Activated CD4-positive, alpha-beta memory T cell treated with anti-CD3 and anti-CD28 coated beads for 36 hours (primary cell): ENCODE measurements at regions of chr12 and their contacts with region 1.

Region 1: DNA sequence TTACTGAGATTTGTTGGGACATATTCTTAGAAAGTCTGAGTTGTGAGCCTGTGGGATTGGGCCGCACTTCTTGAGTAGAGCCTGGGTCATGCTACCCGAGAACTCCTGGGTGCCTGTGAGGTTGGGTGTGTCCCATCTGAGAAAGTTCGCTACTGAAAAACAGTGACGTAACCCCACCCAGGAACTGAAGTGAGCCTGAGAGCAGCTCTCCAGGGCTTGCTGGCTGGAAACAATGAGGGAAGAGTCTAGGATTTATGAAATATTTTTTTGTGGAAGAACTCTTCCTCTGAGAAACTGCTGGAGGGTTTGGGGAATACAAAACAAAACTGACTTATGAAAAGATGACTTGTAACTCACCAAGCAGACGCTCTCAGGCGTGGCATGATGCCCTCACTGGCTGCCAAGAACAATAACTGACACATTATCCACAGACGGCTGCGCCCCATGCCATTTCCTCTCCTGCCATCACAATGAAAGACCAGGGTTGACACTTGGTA is 69.2 kb downstream of the RASSF3 start:
- DNase-seq: peak; percentile 78
- H3K4me3 Mint-ChIP-seq: peak overlapping the region; percentile 62
- H3K27ac Mint-ChIP-seq: peak overlapping the region; percentile 91
- H3K4me1 Mint-ChIP-seq: peaks cover 91% of the 10 kb centered on the region
- H3K27me3 Mint-ChIP-seq: no peaks in the 10 kb centered on the region

Region 2: GRCh38 chr12:64459394-64459891 is 220.1 kb before region 1 on chr12:
- CTCF ChIA-PET with region 1: no interaction called
- POLR2A ChIA-PET with region 1: no interaction called
- intact Hi-C with region 1: loop called (anchors 5 kb)
- DNase-seq: no peak
- H3K4me3 Mint-ChIP-seq: peak overlapping the region; percentile 77
- H3K27ac Mint-ChIP-seq: peak overlapping the region; percentile 91
- H3K4me1 Mint-ChIP-seq: peaks cover 45% of the 10 kb centered on the region
- H3K27me3 Mint-ChIP-seq: no peaks in the 10 kb centered on the region

Region 3: DNA sequence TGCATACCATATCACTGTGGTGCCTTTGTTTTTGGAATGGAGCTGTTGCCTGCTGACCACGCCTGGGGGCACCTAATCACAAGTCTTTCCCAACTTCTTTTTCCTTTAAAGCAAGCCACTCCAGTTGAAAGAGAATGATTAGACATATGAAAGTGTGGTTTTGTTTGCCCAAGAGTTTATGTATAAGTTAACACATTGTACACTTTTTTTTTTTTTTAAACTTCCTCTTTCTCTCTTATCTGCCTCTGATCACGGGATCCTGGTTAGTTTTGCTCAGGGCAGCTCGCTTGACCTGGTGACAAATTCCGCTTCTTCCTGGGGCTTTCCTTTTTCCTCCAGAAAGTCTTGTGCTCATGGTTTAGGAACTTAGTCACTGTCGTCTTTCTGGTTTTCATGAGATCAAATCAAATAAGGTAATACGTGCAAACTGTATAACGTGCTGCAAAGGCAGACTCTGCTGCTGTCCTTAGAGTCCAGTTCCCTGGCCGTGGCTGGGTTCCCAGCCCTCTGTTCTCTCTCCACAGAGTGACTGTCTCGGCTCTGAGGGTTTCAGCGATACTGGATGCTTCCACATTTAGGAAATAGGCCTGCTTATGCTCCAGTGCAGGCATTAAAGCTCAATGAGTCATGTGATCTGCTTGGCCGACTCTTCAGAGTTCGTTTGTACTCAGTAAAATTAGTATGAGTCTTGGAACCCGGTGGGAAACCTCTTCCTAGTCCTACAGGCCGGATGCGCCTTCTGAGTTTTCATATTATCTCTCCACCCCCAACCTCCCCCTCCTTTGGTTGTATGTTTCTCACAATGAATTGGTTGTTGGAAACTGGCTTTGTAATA is 54.1 kb before region 1 on chr12:
- CTCF ChIA-PET with region 1: interaction called, 4 read pairs
- POLR2A ChIA-PET with region 1: no interaction called
- intact Hi-C with region 1: loop called (anchors 1 kb)
- DNase-seq: peak; percentile 58
- H3K4me3 Mint-ChIP-seq: peak overlapping the region; percentile 65
- H3K27ac Mint-ChIP-seq: peak overlapping the region; percentile 88
- H3K4me1 Mint-ChIP-seq: peaks cover 66% of the 10 kb centered on the region
- H3K27me3 Mint-ChIP-seq: no peaks in the 10 kb centered on the region